Breast epithelium (tissue), 4 donors: ENCODE measurements at regions of chr13 and their contacts with region 1.

Region 1: GRCh38 chr13:100662468-100663211 is 12.0 kb downstream of the TMTC4 start:
- DNase-seq: no peak
- H3K4me3 ChIP-seq: no peak overlapping the region
- H3K27ac ChIP-seq: no peak overlapping the region
- H3K4me1 ChIP-seq: no peaks in the 10 kb centered on the region
- H3K27me3 ChIP-seq: no peaks in the 10 kb centered on the region
- CTCF ChIP-seq: no peak
- POLR2A ChIP-seq: no peak

Region 2: DNA sequence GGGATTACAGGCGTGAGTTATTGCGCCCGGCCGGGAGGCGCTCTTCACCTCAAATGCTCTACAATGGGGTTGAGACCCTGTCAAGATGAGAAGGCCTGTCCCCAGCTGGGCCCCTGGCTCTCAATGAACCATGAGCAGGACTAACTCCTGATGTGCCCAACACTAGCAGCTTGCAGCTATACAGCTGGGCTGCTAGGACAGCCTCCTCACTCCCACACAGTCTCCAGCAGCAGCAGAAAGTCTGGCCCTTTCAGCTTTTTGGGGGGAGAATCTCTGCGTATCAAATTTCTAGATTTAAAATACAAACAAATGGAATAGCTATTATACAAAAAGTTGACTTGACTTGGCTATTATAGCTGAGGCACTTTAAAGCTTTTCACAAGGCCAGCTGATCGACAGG is 18.3 kb before region 1 on chr13:
- intact Hi-C with region 1: loop called (anchors 1 kb)
- DNase-seq: no peak
- H3K4me3 ChIP-seq: no peak overlapping the region
- H3K27ac ChIP-seq: no peak overlapping the region
- H3K4me1 ChIP-seq: no peaks in the 10 kb centered on the region
- H3K27me3 ChIP-seq: no peaks in the 10 kb centered on the region
- CTCF ChIP-seq: no peak
- POLR2A ChIP-seq: no peak

Region 3: DNA sequence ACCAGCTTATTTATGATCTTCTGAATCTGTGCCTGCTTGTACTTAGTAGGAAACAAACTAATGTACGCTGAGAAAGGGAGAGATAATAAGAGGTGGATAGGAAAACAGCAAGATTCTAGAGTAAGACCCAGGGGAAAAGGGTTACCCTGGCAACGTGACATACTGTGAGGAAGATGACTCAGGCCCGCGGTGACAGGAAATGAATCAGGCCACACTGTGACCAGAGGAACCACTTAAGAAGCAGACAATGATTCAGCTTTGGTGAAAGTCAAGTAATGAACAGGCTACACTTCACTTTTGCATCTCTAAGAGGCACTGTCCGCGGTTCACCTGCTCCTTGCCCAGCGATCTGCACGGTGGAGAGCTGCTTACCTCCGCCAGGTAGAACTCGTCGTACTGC is 595.4 kb after region 1 on chr13:
- intact Hi-C with region 1: no loop called
- DNase-seq: no peak
- H3K4me3 ChIP-seq: no peak overlapping the region
- H3K27ac ChIP-seq: no peak overlapping the region
- H3K4me1 ChIP-seq: no peaks in the 10 kb centered on the region
- H3K27me3 ChIP-seq: no peaks in the 10 kb centered on the region
- CTCF ChIP-seq: no peak
- POLR2A ChIP-seq: no peak